Activated CD8-positive, alpha-beta memory T cell treated with anti-CD3 and anti-CD28 coated beads, Interleukin-2, amount 10 ng/mL, durations not matched to agents 7 days and 5 days (primary cell): ENCODE measurements at regions of chr1 and their contacts with region 1.

Region 1: DNA sequence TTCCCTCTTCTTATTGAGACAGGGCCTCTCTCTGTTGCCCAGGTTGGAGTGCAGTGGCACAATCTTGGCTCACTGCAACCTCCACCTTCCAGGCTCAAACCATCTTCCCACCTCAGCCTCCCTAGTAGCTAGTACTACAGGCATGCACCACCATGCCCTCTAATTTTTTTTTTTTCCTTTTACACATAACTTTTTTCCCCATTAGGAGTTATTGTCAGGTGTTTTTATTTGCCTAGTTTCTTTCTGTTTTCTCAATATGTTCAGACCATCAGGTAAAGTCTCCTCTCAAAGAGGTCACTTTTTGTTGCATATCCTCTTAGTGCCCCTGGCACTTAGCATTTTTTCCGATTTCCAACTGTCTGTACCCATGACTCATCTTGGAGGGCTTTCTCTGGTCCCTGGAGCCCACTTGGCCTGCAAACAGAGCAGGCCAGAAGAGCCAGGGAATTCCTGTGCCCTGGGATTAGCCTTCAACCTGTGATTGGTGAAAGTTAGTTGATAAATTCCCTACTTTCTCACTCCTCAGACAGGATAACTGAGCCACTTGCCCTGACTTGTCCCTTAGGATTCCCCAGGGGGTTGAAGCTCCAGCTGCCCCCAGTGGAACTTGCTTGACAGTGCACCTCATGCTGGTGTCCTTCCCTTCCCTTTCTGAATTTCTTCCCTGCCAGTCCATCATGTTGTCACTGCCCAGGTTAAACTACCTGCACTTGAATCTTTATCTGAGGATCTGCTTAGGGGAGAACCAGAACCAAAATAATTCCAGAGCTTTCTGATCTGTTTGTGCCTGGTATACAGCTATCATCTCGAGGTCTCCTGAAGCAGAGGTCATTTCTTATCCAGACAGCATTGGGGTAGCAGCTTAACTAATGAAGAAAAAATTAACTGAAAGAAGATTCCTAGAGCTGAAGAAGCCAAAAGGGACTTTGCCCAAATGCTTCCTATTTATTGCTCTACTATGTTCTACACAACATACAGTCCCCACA is 2.4 kb downstream of the NTPCR start:
- DNase-seq: peak; percentile 48
- ATAC-seq: no peak
- H3K4me3 Mint-ChIP-seq: peak overlapping the region; percentile 3
- H3K27ac Mint-ChIP-seq: no peak overlapping the region
- H3K4me1 Mint-ChIP-seq: peaks cover 36% of the 10 kb centered on the region
- H3K27me3 Mint-ChIP-seq: no peaks in the 10 kb centered on the region

Region 2: GRCh38 chr1:232962771-232963745 is 10.3 kb after region 1 on chr1:
- CTCF ChIA-PET with region 1: interaction called, 10 read pairs
- DNase-seq: no peak
- ATAC-seq: no peak
- H3K4me3 Mint-ChIP-seq: no peak overlapping the region
- H3K27ac Mint-ChIP-seq: no peak overlapping the region
- H3K4me1 Mint-ChIP-seq: peaks cover 2% of the 10 kb centered on the region
- H3K27me3 Mint-ChIP-seq: no peaks in the 10 kb centered on the region

Region 3: DNA sequence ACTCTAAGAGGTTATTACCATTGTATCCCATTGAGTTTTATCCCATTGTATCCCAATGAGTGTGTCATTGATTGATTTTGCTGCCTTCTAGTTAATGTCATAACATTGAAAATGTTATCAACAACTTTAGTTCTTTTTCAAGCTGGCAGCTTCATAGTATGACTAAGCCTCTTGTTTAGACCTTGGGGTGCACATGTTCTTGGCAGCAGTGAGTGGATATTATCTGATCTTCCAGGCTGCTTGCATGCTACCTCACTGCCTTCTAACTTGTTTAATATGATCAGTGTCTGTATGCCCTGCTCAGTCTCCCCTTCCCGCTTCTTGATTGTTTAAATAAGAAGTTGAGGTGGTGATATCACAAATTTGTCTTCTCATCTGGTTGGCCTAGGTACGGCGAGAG is 22.2 kb after region 1 on chr1:
- CTCF ChIA-PET with region 1: no interaction called
- DNase-seq: no peak
- ATAC-seq: no peak
- H3K4me3 Mint-ChIP-seq: no peak overlapping the region
- H3K27ac Mint-ChIP-seq: no peak overlapping the region
- H3K4me1 Mint-ChIP-seq: peaks cover 18% of the 10 kb centered on the region
- H3K27me3 Mint-ChIP-seq: no peaks in the 10 kb centered on the region